ENCODE measurements at regions of chr12 and their contacts with region 1.

Region 1: GRCh38 chr12:91811481-91812287 is 334.0 kb downstream of the BTG1 start:
- DNase-seq: no peak
- H3K4me3 ChIP-seq: no peak overlapping the region
- CTCF ChIP-seq: peak; percentile 54

Region 2: GRCh38 chr12:91785655-91786498 is 25.8 kb before region 1 on chr12:
- CTCF ChIA-PET with region 1: interaction called, 21 read pairs
- POLR2A ChIA-PET with region 1: no interaction called
- DNase-seq: no peak
- H3K4me3 ChIP-seq: no peak overlapping the region
- CTCF ChIP-seq: no peak

Region 3: GRCh38 chr12:91825999-91826398 is 14.3 kb after region 1 on chr12:
- CTCF ChIA-PET with region 1: interaction called, 41 read pairs
- POLR2A ChIA-PET with region 1: no interaction called
- DNase-seq: no peak
- H3K4me3 ChIP-seq: no peak overlapping the region
- CTCF ChIP-seq: no peak

Region 4: GRCh38 chr12:91841822-91842221 is 30.1 kb after region 1 on chr12:
- CTCF ChIA-PET with region 1: interaction called, 10 read pairs
- POLR2A ChIA-PET with region 1: no interaction called
- DNase-seq: no peak
- H3K4me3 ChIP-seq: no peak overlapping the region
- CTCF ChIP-seq: no peak

Region 5: DNA sequence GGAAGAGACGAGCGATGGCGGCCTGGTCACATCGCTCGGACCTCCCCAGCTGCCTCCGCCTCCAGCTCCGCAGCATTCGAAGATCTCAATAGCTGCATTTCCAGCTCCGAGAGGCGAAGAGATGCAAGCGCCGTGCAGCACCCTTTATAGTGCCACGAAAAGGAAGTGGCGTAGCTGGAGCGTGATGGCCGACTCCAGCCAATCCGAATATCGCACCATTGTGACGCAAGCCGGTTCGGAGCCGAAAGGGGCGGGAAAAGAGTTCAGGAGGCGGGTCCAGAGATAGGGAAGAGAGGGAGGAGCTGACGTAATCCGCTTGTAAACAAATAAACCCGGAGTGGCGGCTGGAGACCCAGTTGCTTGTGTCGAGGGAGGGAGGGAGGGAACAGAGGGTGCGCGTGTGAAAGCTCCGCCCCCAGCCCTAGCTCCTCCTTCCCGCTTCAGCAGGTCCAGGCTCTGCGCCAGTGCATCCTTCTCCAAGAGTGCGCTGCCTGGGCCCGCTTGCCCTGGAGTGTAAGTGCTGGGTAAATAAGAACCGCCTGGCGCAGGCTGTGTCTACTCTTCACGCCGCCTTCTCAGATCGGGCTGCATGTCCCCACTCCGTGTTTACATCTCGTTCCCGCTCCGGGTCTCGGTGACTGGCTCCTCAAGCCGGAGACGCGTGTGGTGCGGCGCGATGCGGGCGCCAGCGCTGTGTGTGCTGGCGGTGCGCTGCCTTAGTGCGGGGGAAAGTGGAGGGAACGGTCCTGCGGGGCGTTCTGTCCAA is 334.2 kb after region 1 on chr12 and contains the start of gene BTG1:
- CTCF ChIA-PET with region 1: interaction called, 43 read pairs
- POLR2A ChIA-PET with region 1: interaction called, 26 read pairs
- DNase-seq: peak; percentile 99
- H3K4me3 ChIP-seq: peak within 1 kb of the TSS; percentile 95
- CTCF ChIP-seq: no peak

Region 6: DNA sequence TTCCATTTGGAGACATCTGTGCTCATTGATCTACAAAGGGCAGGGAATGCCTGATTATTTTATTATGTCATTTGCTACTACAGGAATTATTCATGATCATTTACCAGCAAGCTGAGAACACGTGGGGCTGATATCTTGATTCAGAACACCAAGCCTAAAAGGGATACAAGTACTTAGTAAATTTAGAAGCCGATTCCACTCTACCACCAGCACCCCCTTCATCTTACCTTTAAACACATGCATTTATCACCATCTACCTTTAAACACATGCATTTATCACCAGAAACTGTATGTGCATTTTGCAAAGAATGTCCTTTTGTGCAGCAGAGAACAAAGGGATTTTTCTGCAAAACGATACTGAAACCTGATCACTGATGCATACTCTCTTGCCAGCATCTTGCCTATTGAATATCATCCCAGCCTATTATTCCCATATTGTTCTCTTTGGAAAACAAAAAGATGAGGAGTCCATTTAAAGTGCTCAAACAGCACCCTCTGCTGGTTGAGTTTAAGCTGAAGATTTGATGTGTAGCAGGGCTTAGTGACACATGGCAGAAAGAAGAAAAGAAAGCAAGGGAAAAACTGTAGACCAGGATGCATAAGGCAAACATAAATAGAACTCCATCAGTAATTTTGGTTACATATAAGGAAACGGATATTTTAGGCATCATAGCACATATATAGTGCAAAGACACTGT is 758.5 kb after region 1 on chr12:
- CTCF ChIA-PET with region 1: interaction called, 11 read pairs
- POLR2A ChIA-PET with region 1: no interaction called
- DNase-seq: peak; percentile 38
- H3K4me3 ChIP-seq: no peak overlapping the region
- CTCF ChIP-seq: peak; percentile 48

Measured in AG04449 (cell line).